AG04450 (cell line): ENCODE measurements at regions of chr2 and their contacts with region 1.

Region 1: GRCh38 chr2:186503848-186504606 is 18.0 kb downstream of the ZC3H15 start:
- DNase-seq: no peak
- H3K4me3 ChIP-seq: no peak overlapping the region
- H3K27ac ChIP-seq: no peak overlapping the region
- H3K27me3 ChIP-seq: no peaks in the 10 kb centered on the region
- CTCF ChIP-seq: peak; percentile 56

Region 2: DNA sequence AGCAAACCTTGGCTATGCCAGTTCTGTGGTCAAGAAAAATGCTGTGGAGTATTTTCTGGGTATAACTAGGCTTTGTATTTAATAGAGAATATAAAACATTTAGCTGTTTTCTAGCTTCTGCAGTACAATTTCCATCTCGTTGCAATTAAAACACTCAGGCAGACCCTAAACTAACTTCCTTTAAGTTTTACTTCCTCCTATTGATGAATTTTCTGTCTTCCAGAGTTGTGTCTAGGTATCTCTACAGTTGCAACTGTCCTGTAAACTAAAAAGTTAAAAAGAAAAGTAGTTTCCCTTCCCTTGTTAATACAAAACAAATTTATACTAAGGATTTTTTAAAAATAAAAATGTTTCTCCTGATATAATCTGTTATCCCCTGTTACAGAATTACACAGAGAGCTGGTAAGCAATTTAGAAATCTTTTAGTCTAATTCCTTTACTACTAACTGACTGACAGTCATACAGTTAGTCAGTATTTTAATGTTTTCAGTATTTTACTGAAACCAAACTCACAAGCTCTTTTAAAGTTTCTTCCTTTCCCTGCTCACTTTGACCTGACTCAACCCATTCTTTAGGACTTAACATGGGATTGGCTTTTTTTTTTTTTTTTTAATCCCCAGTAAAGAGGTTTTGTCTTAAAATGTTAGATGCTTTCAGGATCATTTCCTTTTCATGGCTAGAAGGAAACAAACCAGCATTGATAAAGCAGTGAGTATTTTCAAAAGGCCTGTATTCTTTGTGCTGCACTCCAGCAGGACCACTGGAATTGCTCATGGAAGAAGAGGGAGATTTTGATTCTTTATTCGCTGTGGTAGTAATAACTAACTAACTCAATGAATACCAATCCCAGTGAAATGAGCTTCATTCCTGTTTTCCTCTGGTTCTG is 108.8 kb after region 1 on chr2:
- CTCF ChIA-PET with region 1: interaction called, 17 read pairs
- POLR2A ChIA-PET with region 1: interaction called, 3 read pairs
- DNase-seq: no peak
- H3K4me3 ChIP-seq: no peak overlapping the region
- H3K27ac ChIP-seq: no peak overlapping the region
- H3K27me3 ChIP-seq: no peaks in the 10 kb centered on the region
- CTCF ChIP-seq: no peak

Region 3: GRCh38 chr2:186669146-186669545 is 165.1 kb after region 1 on chr2:
- CTCF ChIA-PET with region 1: interaction called, 16 read pairs
- POLR2A ChIA-PET with region 1: no interaction called
- DNase-seq: no peak
- H3K4me3 ChIP-seq: no peak overlapping the region
- H3K27ac ChIP-seq: no peak overlapping the region
- H3K27me3 ChIP-seq: no peaks in the 10 kb centered on the region
- CTCF ChIP-seq: no peak